HEK293 (cell line): ENCODE measurements at regions of chr14 and their contacts with region 1.

Region 1: DNA sequence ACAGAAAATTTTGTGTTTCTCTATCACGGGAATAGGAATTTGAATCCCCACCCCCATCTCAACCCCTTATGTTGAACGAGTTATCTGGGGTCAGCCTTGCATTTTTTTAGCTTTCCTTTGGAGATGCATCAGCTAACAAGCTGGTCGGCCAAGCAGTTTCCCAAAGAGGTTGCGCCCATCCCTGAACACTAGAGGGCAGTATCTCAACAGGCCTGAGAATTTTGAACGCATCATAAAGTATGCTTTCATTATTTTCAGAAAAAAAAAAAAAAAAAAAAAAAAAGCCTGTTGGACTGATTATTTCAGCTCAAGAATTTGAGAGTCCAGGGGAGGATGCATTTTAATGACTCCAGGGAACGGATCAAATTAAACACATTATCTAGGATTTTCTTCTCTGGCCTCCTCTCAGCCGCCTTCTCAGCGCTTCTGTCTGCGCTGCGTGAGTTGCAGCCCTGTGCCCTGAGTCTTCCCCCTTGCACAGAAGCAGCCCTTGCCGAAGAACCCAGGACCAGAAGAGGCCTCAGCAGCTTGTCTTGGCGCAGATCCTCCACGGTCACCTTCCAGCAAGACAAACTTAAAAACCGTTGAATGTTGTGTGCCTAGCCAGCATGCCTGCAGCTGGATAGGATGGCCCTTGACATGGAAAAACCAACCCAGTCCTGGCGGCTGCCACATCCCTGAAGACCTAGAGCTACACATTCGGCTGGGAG is 76.6 kb upstream of the GZMB start:
- H3K4me3 ChIP-seq: no peak overlapping the region
- H3K27ac ChIP-seq: no peak overlapping the region
- H3K4me1 ChIP-seq: no peaks in the 10 kb centered on the region
- CTCF ChIP-seq: no peak

Region 2: GRCh38 chr14:24690492-24690891 is 20.1 kb before region 1 on chr14:
- CTCF ChIA-PET with region 1: interaction called, 10 read pairs
- POLR2A ChIA-PET with region 1: no interaction called
- H3K4me3 ChIP-seq: no peak overlapping the region
- H3K27ac ChIP-seq: no peak overlapping the region
- H3K4me1 ChIP-seq: no peaks in the 10 kb centered on the region
- CTCF ChIP-seq: no peak

Region 3: DNA sequence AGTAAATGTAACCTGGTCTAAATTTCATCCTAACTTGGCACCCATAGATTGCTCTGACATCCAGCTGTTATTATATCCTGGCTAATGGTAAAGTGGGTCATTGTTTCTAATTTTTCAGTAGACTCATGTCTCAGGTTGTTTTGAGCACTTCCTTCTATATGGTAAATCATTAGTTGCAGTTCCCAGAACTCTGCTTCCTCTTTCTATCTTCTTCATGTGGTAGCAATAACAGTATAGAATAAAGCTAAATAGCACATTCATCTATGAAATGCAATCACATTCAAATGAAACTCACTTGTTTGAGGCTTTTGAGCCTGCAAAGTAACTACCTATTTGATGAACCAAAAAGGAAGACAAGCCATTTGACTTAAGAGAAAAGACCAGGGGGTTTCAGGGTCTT is 11.5 kb before region 1 on chr14:
- CTCF ChIA-PET with region 1: interaction called, 12 read pairs
- POLR2A ChIA-PET with region 1: no interaction called
- H3K4me3 ChIP-seq: no peak overlapping the region
- H3K27ac ChIP-seq: no peak overlapping the region
- H3K4me1 ChIP-seq: no peaks in the 10 kb centered on the region
- CTCF ChIP-seq: no peak

Region 4: DNA sequence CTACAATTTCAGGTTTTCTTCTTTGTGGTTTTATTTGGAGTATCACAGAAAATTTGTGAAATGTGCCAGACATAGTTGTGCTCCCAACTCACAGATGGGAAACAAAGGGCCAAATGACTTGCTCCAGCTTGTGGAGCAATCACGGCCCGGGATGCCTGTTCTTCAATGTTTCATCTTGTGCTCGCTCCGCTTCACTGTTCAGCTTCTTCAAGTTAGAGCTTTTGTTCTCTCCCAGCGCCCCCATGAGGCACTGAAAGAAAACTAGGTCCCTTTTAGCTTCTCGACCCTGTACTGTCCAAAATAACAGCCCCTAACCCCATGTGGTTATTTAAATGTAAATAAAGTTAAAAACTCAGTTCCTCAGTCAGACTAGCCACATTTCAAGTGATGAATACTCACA is 527.3 kb after region 1 on chr14:
- CTCF ChIA-PET with region 1: interaction called, 21 read pairs
- POLR2A ChIA-PET with region 1: no interaction called
- H3K4me3 ChIP-seq: no peak overlapping the region
- H3K27ac ChIP-seq: no peak overlapping the region
- H3K4me1 ChIP-seq: no peaks in the 10 kb centered on the region
- CTCF ChIP-seq: no peak

Region 5: DNA sequence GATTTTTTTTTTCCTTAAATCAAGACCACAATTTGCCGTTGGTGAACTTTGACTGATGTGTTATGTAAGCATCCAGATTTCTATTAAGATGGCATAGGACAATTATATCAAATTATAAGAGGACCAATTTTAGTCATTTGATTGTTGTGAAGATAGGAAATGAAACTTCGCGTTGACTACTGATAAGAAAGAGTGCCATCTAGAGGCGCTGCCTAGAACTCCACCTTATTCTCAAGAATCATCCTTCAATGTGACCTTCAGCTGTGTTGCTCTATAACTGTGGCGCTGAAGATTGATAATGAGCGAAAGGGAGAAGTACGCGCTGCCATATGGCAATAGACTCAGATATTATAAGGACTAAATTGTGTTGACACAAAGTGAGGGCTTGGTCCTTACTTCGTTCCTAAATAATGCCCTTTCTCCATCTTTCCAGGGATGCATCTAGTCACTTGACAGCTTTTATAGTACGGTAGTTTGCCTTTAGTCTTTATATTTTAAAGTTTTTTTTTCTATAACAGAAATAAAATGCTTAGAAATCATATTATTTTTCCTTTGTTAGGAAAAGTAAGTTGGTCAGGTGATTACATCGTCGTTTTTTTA is 690.1 kb after region 1 on chr14:
- CTCF ChIA-PET with region 1: interaction called, 12 read pairs
- POLR2A ChIA-PET with region 1: no interaction called
- H3K4me3 ChIP-seq: no peak overlapping the region
- H3K27ac ChIP-seq: no peak overlapping the region
- H3K4me1 ChIP-seq: no peaks in the 10 kb centered on the region
- CTCF ChIP-seq: no peak

Region 6: DNA sequence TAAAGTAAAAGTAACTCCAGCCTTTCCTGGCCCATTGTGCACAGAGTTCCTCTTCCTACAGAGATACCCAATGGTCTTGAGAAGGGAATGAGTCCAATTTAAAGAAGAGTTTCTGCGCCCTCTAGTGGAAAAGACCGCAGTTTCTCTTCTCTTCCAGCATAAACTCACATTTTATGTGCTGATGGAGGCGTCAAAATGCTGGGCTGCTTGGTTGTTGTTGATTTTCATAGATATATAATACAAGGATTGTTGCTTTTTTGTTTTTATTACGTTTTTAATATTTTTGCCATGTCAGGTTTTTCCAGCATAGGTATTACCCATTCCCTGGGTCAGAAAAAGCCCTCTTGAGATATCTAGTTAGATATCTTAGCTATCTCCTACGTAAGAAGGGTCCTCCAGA is 696.3 kb after region 1 on chr14:
- CTCF ChIA-PET with region 1: interaction called, 12 read pairs
- POLR2A ChIA-PET with region 1: no interaction called
- H3K4me3 ChIP-seq: no peak overlapping the region
- H3K27ac ChIP-seq: no peak overlapping the region
- H3K4me1 ChIP-seq: no peaks in the 10 kb centered on the region
- CTCF ChIP-seq: no peak